Colonic mucosa (tissue), 4 donors: ENCODE measurements at regions of chr9 and their contacts with region 1.

Region 1: GRCh38 chr9:72871685-72872084 is 81.2 kb downstream of the ALDH1A1 start:
- DNase-seq: no peak
- H3K4me3 ChIP-seq: no peak overlapping the region
- H3K27ac ChIP-seq: no peak overlapping the region
- H3K4me1 ChIP-seq: peaks cover 3% of the 10 kb centered on the region
- H3K27me3 ChIP-seq: no peaks in the 10 kb centered on the region
- CTCF ChIP-seq: peak; percentile 53

Region 2: GRCh38 chr9:72952914-72953313 is 81.2 kb after region 1 on chr9 and contains the start of gene ALDH1A1:
- intact Hi-C with region 1: loop called (anchors 10 kb)
- DNase-seq: peak; percentile 63
- H3K4me3 ChIP-seq: peak within 1 kb of the TSS; percentile 22
- H3K27ac ChIP-seq: peak within 1 kb of the TSS; percentile 39
- H3K4me1 ChIP-seq: peaks cover 15% of the 10 kb centered on the region
- H3K27me3 ChIP-seq: no peaks in the 10 kb centered on the region
- CTCF ChIP-seq: no peak
- total RNA-seq, gene ALDH1A1: 61.3 to 102 TPM

Region 3: GRCh38 chr9:73023025-73023541 is 151.4 kb after region 1 on chr9:
- intact Hi-C with region 1: loop called (anchors 5 kb)
- DNase-seq: peak; percentile 64
- H3K4me3 ChIP-seq: no peak overlapping the region
- H3K27ac ChIP-seq: no peak overlapping the region
- H3K4me1 ChIP-seq: no peaks in the 10 kb centered on the region
- H3K27me3 ChIP-seq: no peaks in the 10 kb centered on the region
- CTCF ChIP-seq: peak; percentile 74

Region 4: GRCh38 chr9:73081979-73082657 is 210.4 kb after region 1 on chr9:
- intact Hi-C with region 1: loop called (anchors 5 kb)
- DNase-seq: no peak
- H3K4me3 ChIP-seq: no peak overlapping the region
- H3K27ac ChIP-seq: no peak overlapping the region
- H3K4me1 ChIP-seq: no peaks in the 10 kb centered on the region
- H3K27me3 ChIP-seq: no peaks in the 10 kb centered on the region
- CTCF ChIP-seq: peak; percentile 60